ENCODE measurements at regions of chr2 and their contacts with region 1.

Region 1: DNA sequence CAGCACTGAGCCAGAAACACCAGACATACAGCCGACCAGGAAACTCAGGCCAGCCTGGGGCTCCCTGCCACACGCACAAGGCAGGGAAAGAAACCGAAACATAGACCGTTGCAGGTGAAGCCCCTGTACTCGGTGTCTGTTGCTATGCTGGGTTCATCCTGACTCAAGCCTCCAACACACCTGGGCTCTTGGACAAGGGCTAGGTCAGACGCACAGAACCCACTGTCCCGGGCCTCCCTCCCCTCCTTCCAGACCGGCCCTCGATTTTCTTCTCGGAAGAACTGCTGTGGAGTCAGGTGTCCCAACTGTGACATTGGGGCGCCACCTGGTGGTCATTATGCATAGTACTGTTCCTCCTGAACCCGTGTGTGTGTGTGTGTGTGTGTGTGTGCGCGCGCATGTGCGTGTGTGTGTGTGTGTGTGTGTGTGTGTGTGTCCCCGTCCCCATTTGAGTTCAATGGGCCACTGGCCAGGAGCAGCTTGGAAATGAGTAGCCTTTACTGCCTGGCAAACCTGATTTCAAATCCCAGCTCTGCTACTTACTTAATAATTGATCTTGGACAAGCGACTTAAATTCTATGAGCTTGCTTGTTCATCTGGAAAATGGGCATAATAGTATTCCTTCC is 55.4 kb upstream of the GLI2 start:
- DNase-seq: peak; percentile 61 to 97 (median 86)

Region 2: GRCh38 chr2:120511947-120512710 is 168.1 kb before region 1 on chr2:
- intact Hi-C with region 1: loop called (anchors 10 kb)
- DNase-seq: peak in 2 of 10 donors; percentile 17 to 74

Measured in posterior cingulate gyrus (tissue), 11 donors.